HAP-1 (cell line): ENCODE measurements at regions of chr1 and their contacts with region 1.

Region 1: GRCh38 chr1:28865997-28866650 is 48.2 kb upstream of the EPB41 start:
- DNase-seq: no peak
- H3K4me3 ChIP-seq: no peak overlapping the region
- H3K4me1 ChIP-seq: peaks cover 10% of the 10 kb centered on the region
- H3K27me3 ChIP-seq: no peaks in the 10 kb centered on the region

Region 2: DNA sequence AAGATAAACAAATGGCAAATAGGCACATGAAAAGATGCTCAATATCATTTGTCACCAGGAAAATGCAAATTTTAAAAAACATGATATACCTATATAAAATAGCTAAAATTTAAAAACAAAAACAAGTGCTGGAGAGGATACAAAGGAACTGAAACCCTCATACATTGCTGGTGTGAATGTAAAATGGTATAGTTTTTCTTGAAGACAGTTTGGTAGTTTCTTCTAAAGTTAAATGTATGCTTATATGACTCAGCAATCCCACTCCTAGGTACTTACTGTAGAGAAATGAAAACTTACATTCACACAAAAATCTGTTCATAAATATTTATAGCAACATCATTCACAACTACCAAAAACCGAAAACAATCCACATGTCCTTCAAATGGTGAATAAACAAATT is 234.4 kb before region 1 on chr1:
- in situ Hi-C with region 1: no loop called
- DNase-seq: no peak
- H3K4me3 ChIP-seq: no peak overlapping the region
- H3K4me1 ChIP-seq: no peaks in the 10 kb centered on the region
- H3K27me3 ChIP-seq: no peaks in the 10 kb centered on the region

Region 3: GRCh38 chr1:28789412-28789811 is 76.7 kb before region 1 on chr1:
- in situ Hi-C with region 1: loop called (anchors 5 kb)
- DNase-seq: no peak
- H3K4me3 ChIP-seq: no peak overlapping the region
- H3K4me1 ChIP-seq: no peaks in the 10 kb centered on the region
- H3K27me3 ChIP-seq: no peaks in the 10 kb centered on the region

Region 4: DNA sequence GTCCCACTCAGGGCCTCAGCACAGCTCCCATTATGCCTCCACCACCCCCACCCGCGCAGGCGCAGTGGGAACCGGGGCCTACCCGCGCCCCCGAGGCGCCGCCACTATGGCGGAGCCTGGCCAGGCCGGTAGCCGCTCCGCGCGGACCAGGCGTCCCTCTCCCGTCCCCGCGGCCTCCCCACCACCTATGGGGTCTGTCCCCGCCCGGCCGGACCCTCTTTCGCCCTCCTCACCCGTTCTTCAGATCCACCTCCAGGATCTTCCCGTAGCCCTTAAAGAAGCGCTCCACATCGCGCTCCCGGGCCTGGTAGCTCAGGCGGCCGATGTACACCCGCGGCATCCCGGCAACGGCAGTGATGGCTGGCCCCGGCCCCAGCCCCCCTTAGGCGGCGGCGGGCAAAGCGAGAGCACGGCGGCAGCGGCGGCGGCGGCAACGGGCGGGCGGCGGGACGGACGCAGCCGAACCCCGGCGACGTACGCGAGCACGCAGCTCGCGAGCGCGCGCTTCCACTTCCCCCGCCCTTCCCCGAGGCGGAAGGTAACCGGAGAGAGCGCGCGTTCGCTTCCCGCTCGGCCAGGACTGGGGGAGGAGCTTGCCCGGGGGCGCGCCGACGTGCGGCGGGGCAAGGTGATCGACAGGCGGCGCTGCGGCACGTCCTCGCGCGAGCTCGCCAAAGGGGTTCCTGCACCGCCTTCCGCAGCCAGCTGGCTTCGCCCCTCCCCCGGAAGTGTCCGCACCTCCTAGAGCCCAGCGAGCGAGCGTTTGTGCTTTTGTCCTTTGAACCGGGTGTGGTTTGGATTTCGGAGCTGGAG is 315.5 kb after region 1 on chr1 and contains the start of gene SRSF4:
- in situ Hi-C with region 1: no loop called
- DNase-seq: peak; percentile 98 to 100
- H3K4me3 ChIP-seq: peak within 1 kb of the TSS; percentile 99
- H3K4me1 ChIP-seq: peaks cover 33% of the 10 kb centered on the region
- H3K27me3 ChIP-seq: no peaks in the 10 kb centered on the region